ENCODE measurements at regions of chr6 and their contacts with region 1.

Region 1: DNA sequence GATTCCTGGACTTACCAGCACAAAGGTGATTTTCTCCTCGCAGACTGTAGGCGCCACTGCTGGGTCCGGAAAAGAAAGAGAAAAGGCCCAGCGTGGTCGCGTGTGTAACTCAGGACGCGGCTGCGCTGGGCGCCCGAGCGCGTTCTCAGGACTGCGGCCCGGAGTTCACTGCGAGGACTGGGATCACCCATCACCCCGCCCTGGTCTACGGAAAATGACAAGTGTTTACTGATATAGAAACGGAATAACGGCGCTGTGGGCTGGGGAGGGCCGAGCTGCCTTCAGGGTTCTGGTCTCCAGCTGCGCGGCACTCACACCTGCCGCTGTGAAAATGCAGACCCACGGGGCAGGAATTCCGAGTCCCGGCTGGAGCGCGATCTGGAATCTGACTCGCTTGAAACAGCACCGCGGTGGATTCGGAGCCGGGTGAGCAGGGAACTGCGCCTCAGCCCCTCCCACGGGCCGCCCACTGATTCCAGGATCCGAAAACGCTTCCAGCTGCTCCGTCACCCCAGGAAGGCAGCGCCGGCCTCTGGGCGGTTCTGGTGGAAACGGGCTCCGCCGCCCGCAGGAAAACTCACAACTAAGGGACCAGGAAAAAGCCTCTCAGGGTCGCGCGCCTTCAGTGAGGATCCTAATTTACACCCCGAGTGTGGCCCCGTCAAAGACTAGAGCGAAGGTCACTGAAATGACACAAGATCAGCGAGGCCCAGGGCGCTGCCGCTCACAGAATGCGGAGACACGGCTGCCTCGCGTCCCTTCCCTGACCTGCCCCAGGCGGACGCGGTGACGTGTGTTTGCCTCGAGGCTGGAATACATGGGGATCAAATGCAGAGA is 34.5 kb downstream of the HLA-A start:
- DNase-seq: peak; percentile 81
- H3K4me3 ChIP-seq: peak overlapping the region; percentile 37 to 48
- H3K27ac ChIP-seq: peak overlapping the region; percentile 89 to 93
- H3K4me1 ChIP-seq: peaks cover 4% of the 10 kb centered on the region
- H3K27me3 ChIP-seq: no peaks in the 10 kb centered on the region
- CTCF ChIP-seq: peak in 2 of 4 experiments; percentile 38 to 50
- POLR2A ChIP-seq: peak; percentile 50

Region 2: DNA sequence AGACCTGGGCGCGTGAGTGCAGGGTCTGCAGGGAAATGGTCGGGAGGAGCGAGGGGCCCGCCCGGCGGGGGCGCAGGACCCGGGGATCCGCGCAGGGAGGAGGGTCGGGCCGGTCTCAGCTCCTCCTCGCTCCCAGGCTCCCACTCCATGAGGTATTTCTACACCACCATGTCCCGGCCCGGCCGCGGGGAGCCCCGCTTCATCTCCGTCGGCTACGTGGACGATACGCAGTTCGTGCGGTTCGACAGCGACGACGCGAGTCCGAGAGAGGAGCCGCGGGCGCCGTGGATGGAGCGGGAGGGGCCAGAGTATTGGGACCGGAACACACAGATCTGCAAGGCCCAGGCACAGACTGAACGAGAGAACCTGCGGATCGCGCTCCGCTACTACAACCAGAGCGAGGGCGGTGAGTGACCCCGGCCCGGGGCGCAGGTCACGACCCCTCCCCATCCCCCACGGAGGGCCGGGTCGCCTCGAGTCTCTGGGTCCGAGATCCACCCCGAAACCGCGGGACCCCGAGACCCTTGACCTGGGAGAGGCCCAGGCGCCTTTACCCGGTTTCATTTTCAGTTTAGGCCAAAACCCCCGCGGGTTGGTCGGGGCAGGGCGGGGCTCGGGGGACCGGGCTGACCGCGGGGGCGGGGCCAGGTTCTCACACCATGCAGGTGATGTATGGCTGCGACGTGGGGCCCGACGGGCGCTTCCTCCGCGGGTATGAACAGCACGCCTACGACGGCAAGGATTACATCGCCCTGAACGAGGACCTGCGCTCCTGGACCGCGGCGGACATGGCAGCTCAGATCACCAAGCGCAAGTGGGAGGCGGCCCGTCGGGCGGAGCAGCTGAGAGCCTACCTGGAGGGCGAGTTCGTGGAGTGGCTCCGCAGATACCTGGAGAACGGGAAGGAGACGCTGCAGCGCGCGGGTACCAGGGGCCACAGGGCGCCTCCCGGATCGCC is 88.7 kb before region 1 on chr6:
- intact Hi-C with region 1: loop called (anchors 1 kb)
- DNase-seq: peak; percentile 42
- H3K4me3 ChIP-seq: peak overlapping the region; percentile 36 to 50
- H3K27ac ChIP-seq: peak overlapping the region; percentile 82 to 96
- H3K4me1 ChIP-seq: no peaks in the 10 kb centered on the region
- H3K27me3 ChIP-seq: no peaks in the 10 kb centered on the region
- CTCF ChIP-seq: no peak
- POLR2A ChIP-seq: no peak

Region 3: GRCh38 chr6:30061092-30061857 is 84.5 kb after region 1 on chr6 and contains the start of gene POLR1H:
- intact Hi-C with region 1: loop called (anchors 5 kb)
- DNase-seq: peak; percentile 94
- H3K4me3 ChIP-seq: peak within 1 kb of the TSS; percentile 61 to 65
- H3K27ac ChIP-seq: peak within 1 kb of the TSS; percentile 85 to 91
- H3K4me1 ChIP-seq: peaks cover 6% of the 10 kb centered on the region
- H3K27me3 ChIP-seq: no peaks in the 10 kb centered on the region
- CTCF ChIP-seq: peak in 2 of 4 experiments; percentile 32 to 38
- POLR2A ChIP-seq: peak; percentile 84
- total RNA-seq, gene POLR1H: 31.9 to 36.3 TPM

Region 4: GRCh38 chr6:30590994-30591393 is 614.2 kb after region 1 on chr6:
- intact Hi-C with region 1: no loop called
- DNase-seq: peak; percentile 72
- H3K4me3 ChIP-seq: no peak overlapping the region
- H3K27ac ChIP-seq: peak overlapping the region; percentile 67 to 69
- H3K4me1 ChIP-seq: peaks cover 14% of the 10 kb centered on the region
- H3K27me3 ChIP-seq: no peaks in the 10 kb centered on the region
- CTCF ChIP-seq: no peak
- POLR2A ChIP-seq: no peak